ENCODE measurements at regions of chr20 and their contacts with region 1.

Region 1: GRCh38 chr20:44222633-44223368 is 12.2 kb upstream of the OSER1 start:
- ATAC-seq: no peak
- H3K4me3 ChIP-seq: no peak overlapping the region
- H3K27ac ChIP-seq: no peak overlapping the region
- H3K4me1 ChIP-seq: no peaks in the 10 kb centered on the region

Region 2: DNA sequence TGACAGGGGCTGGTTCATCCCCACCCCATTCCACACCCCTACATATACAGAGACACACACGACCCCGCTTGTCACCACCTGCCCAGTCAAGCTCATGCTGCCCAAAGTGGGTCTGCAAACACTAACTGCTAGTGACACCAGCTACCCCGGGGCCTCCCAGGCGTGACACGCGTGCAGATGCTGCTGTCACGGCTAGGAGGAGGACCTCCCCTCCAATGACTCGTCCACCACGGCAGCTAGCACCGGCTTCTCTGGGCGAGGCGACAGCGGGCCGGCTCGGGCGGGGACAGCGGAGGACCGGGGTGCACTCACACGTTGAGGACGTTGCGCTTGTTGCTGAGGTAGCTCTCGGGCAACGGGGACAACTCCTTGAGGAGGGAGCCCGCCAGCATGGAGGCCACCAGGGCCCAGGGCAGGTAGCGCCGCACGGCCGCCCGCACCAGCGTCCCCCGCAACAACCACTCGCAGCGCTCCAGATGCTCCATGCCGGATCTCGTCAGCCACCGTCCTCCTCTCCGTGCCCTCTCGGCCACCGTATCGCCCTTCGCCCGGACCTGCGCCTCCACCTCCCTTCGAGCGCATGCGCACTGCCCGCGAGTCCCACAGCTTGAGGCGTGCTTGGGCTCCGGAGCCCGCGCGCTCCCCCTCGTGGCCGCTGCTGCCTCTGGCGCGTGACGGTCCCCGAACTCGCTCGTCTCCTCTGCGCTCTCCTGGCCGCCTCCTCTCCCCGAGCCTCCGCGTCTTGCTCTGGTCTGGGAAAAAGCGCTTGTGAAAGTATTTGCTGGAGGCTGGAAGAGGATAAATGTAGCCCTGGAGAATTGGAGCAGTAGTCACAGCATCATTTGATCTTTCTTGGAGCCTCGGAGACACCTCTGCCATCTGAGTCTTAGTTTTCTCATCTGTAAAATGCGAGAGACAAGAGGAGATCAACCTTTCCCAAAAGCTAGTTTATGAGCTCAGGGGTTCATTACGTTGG is 88.2 kb after region 1 on chr20 and contains the start of gene FITM2:
- in situ Hi-C with region 1: loop called in 6 of 9 experiments (anchors 10 to 25 kb)
- ATAC-seq: peak; percentile 87 to 96 (median 92)
- H3K4me3 ChIP-seq: peak within 1 kb of the TSS; percentile 58 to 88 (median 61)
- H3K27ac ChIP-seq: peak within 1 kb of the TSS; percentile 57 to 64
- H3K4me1 ChIP-seq: peaks cover 6 to 7% of the 10 kb centered on the region in 2 donors
- total RNA-seq, gene FITM2: 3.7 to 13.5 (median 5.4) TPM

Region 3: GRCh38 chr20:44370639-44371220 is 147.9 kb after region 1 on chr20:
- in situ Hi-C with region 1: no loop called
- ATAC-seq: peak in 3 of 8 experiments; percentile 55 to 96 (median 58)
- H3K4me3 ChIP-seq: no peak overlapping the region
- H3K27ac ChIP-seq: no peak overlapping the region
- H3K4me1 ChIP-seq: no peaks in the 10 kb centered on the region

Region 4: GRCh38 chr20:44651684-44652423 is 429.1 kb after region 1 on chr20 and contains the start of gene ADA:
- in situ Hi-C with region 1: no loop called
- ATAC-seq: peak; percentile 70 to 83 (median 82)
- H3K4me3 ChIP-seq: peak within 1 kb of the TSS; percentile 34 to 61 (median 40)
- H3K27ac ChIP-seq: peak within 1 kb of the TSS in 1 of 2 donors; percentile 24
- H3K4me1 ChIP-seq: peaks cover 0 to 5% of the 10 kb centered on the region in 2 donors
- total RNA-seq, gene ADA: 1.9 to 8.9 (median 4.7) TPM

Measured in motor neuron (in vitro differentiated cells).